ENCODE measurements at regions of chr3 and their contacts with region 1.

Region 1: DNA sequence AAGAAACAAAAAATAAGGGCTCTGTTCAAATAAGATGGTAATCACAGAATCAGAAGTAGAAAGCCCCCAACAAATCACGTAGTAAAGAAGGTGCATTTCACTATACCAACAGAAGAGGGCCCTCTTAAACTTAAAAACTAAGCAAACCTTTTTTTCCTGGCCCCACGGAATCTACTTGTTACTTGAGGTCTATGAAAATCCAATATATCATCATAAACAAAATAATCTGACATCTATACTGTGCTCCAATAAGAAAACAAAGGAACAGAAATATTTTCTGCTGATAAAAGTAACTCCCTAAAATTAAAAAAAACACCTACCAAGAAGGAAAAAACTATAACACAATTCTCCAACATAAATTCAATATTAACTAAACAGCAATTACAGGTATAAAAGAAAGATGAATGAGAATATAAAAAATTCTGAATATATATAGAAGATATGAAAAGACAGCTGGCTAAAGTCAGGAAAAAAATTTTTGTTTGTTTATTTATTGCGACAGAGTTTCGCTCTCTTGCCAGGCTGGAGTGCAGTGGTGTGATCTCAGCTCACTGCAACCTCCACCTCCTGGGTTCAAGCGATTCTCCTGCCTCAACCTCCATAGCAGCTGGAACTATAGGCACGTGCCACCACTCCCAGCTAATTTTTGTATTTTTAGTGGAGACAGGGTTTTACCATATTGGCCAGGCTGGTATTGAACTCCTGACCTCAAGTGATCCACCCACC is 81.8 kb downstream of the CLASP2 start:
- DNase-seq: no peak
- ATAC-seq: no peak

Region 2: GRCh38 chr3:33787328-33788009 is 151.2 kb after region 1 on chr3:
- intact Hi-C with region 1: loop called (anchors 2 kb)
- DNase-seq: no peak
- ATAC-seq: peak; percentile 72

Measured in Right ventricle myocardium inferior (tissue), 1 donor.